PC-3 (cell line): ENCODE measurements at regions of chr12 and their contacts with region 1.

Region 1: GRCh38 chr12:3872800-3873636 is at the start of gene PARP11:
- DNase-seq: peak; percentile 82
- ATAC-seq: peak; percentile 99
- H3K4me3 ChIP-seq: peak within 1 kb of the TSS; percentile 79
- H3K27ac ChIP-seq: 0 out of 2 replicates have a peak within 1 kb of the TSS, but pooled peaks have one; percentile 25
- H3K4me1 ChIP-seq: peaks cover 9% of the 10 kb centered on the region
- H3K27me3 ChIP-seq: no peaks in the 10 kb centered on the region; the same call in 1 of the 2 replicates
- CTCF ChIP-seq: no peak
- total RNA-seq, gene PARP11: 0.98 and 2.2 TPM in 2 replicates

Region 2: GRCh38 chr12:3820122-3820521 is 52.9 kb before region 1 on chr12:
- CTCF ChIA-PET with region 1: no interaction called
- POLR2A ChIA-PET with region 1: no interaction called
- intact Hi-C with region 1: loop called (anchors 2 kb)
- DNase-seq: peak; percentile 38
- ATAC-seq: peak; percentile 38; the same call in 1 of the 2 replicates
- H3K4me3 ChIP-seq: no peak overlapping the region
- H3K27ac ChIP-seq: no peak overlapping the region
- H3K4me1 ChIP-seq: no peaks in the 10 kb centered on the region
- H3K27me3 ChIP-seq: no peaks in the 10 kb centered on the region
- CTCF ChIP-seq: no peak

Region 3: DNA sequence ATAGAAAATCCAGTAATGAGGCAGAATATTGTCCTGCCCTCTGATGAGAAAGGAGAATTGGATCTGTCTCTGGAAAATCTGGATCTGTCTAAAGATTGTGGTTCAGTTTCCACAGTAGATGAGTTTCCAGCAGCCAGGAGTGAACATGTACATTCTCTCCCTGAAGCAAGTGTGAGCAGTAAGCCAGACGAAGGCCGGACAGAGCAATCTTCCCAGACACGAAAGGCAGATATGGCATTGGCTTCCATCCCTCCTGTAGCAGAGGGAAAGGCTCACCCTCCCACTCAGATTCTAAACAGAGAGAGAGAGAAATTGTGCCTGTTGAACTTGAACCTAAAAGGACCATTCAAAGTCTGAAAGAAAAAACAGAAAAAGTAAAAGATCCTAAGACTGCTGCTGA is 31.2 kb before region 1 on chr12:
- CTCF ChIA-PET with region 1: no interaction called
- POLR2A ChIA-PET with region 1: no interaction called
- intact Hi-C with region 1: no loop called
- DNase-seq: no peak
- ATAC-seq: no peak
- H3K4me3 ChIP-seq: no peak overlapping the region
- H3K27ac ChIP-seq: no peak overlapping the region
- H3K4me1 ChIP-seq: no peaks in the 10 kb centered on the region; the same call in 1 of the 2 replicates
- H3K27me3 ChIP-seq: no peaks in the 10 kb centered on the region
- CTCF ChIP-seq: no peak